Activated CD4-positive, alpha-beta T cell treated with anti-CD3 and anti-CD28 coated beads, Interleukin-2, amount 10 ng/mL, durations not matched to agents 7 days and 5 days (primary cell): ENCODE measurements at regions of chr14 and their contacts with region 1.

Region 1: GRCh38 chr14:99870617-99871016 is 77.4 kb downstream of the EML1 start:
- DNase-seq: no peak
- H3K4me3 Mint-ChIP-seq: no peak overlapping the region
- H3K27ac Mint-ChIP-seq: no peak overlapping the region
- H3K4me1 Mint-ChIP-seq: no peaks in the 10 kb centered on the region
- H3K27me3 Mint-ChIP-seq: peaks cover 38% of the 10 kb centered on the region

Region 2: GRCh38 chr14:99808515-99808914 is 62.1 kb before region 1 on chr14:
- CTCF ChIA-PET with region 1: no interaction called
- POLR2A ChIA-PET with region 1: no interaction called
- DNase-seq: no peak
- H3K4me3 Mint-ChIP-seq: no peak overlapping the region
- H3K27ac Mint-ChIP-seq: no peak overlapping the region
- H3K4me1 Mint-ChIP-seq: no peaks in the 10 kb centered on the region
- H3K27me3 Mint-ChIP-seq: peaks cover 17% of the 10 kb centered on the region

Region 3: DNA sequence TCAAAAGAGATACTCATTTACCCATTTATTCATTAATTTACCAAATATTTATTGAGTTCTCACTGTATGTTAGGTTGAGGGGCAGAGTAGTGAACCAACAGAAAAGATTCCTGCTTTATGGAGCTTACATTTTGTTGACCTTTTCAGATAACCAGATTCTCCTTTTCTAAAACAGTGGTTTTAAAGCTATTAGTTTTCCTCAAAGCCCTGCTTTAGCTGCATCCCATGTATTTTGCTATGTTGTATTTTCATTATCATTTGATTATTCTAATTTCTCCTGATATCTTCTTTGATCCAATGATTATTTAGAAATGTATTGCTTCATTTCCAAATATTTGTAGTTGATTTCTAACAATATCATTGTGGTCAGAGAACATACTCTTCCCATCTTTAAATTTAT is 23.8 kb before region 1 on chr14:
- CTCF ChIA-PET with region 1: no interaction called
- POLR2A ChIA-PET with region 1: interaction called, 19 read pairs
- DNase-seq: no peak
- H3K4me3 Mint-ChIP-seq: no peak overlapping the region
- H3K27ac Mint-ChIP-seq: no peak overlapping the region
- H3K4me1 Mint-ChIP-seq: no peaks in the 10 kb centered on the region
- H3K27me3 Mint-ChIP-seq: peaks cover 27% of the 10 kb centered on the region